ENCODE measurements at regions of chr17 and their contacts with region 1.

Region 1: GRCh38 chr17:50547035-50547735 is at the start of gene SPATA20:
- DNase-seq: peak; percentile 96 to 97
- H3K4me3 ChIP-seq: peak within 1 kb of the TSS in 2 of 3 donors; percentile 38 to 56
- H3K27ac ChIP-seq: peak within 1 kb of the TSS; percentile 76 to 90 (median 82)
- H3K4me1 ChIP-seq: peaks cover 16 to 26% of the 10 kb centered on the region in 2 donors
- H3K27me3 ChIP-seq: no peaks in the 10 kb centered on the region
- CTCF ChIP-seq: peak; percentile 98 to 100 (median 99)
- POLR2A ChIP-seq: peak; percentile 66 to 91
- total RNA-seq, gene SPATA20: 94.9 to 177 (median 125) TPM

Region 2: DNA sequence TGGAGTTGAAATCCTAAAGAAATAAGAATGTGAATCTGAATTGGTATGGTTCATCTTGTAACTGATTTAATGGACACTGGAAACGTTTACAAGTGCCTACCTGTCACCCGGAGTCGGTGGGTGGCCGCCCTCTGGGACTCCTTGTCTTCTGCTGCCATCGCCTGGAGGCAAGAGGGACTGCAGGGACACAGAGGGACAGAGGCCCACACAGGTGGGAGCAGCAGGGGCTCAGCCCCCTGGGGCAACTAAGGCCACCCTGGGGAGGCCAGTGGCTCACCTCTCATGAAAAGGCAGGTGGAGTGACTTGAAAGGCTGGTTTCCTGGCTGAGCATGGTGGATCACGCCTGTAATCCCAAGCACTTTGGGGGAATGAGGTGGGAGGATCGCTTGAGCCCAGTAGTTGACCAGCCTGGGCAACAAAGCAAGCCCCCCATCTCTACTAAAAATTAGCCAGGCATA is 249.7 kb before region 1 on chr17:
- intact Hi-C with region 1: no loop called
- DNase-seq: peak; percentile 76 to 83
- H3K4me3 ChIP-seq: no peak overlapping the region
- H3K27ac ChIP-seq: no peak overlapping the region
- H3K4me1 ChIP-seq: no peaks in the 10 kb centered on the region
- H3K27me3 ChIP-seq: no peaks in the 10 kb centered on the region
- CTCF ChIP-seq: peak; percentile 79 to 97 (median 92)
- POLR2A ChIP-seq: no peak

Region 3: GRCh38 chr17:50498021-50498874 is 48.9 kb before region 1 on chr17:
- intact Hi-C with region 1: no loop called
- DNase-seq: no peak
- H3K4me3 ChIP-seq: no peak overlapping the region
- H3K27ac ChIP-seq: no peak overlapping the region
- H3K4me1 ChIP-seq: no peaks in the 10 kb centered on the region
- H3K27me3 ChIP-seq: no peaks in the 10 kb centered on the region
- CTCF ChIP-seq: no peak
- POLR2A ChIP-seq: no peak

Region 4: GRCh38 chr17:50697663-50698274 is 150.6 kb after region 1 on chr17:
- intact Hi-C with region 1: loop called (anchors 5 kb)
- DNase-seq: no peak
- H3K4me3 ChIP-seq: no peak overlapping the region
- H3K27ac ChIP-seq: no peak overlapping the region
- H3K4me1 ChIP-seq: peaks cover 12 to 23% of the 10 kb centered on the region in 2 donors
- H3K27me3 ChIP-seq: no peaks in the 10 kb centered on the region
- CTCF ChIP-seq: no peak
- POLR2A ChIP-seq: no peak

Region 5: GRCh38 chr17:50707289-50708049 is 160.3 kb after region 1 on chr17 and contains the start of gene ANKRD40:
- intact Hi-C with region 1: loop called (anchors 5 kb)
- DNase-seq: peak; percentile 85 to 87
- H3K4me3 ChIP-seq: peak within 1 kb of the TSS; percentile 46 to 70 (median 52)
- H3K27ac ChIP-seq: peak within 1 kb of the TSS; percentile 96 to 98 (median 98)
- H3K4me1 ChIP-seq: peaks cover 20 to 32% of the 10 kb centered on the region in 2 donors
- H3K27me3 ChIP-seq: no peaks in the 10 kb centered on the region
- CTCF ChIP-seq: no peak
- POLR2A ChIP-seq: peak; percentile 18 to 68
- total RNA-seq, gene ANKRD40: 29.4 to 40.2 (median 35.1) TPM

Region 6: DNA sequence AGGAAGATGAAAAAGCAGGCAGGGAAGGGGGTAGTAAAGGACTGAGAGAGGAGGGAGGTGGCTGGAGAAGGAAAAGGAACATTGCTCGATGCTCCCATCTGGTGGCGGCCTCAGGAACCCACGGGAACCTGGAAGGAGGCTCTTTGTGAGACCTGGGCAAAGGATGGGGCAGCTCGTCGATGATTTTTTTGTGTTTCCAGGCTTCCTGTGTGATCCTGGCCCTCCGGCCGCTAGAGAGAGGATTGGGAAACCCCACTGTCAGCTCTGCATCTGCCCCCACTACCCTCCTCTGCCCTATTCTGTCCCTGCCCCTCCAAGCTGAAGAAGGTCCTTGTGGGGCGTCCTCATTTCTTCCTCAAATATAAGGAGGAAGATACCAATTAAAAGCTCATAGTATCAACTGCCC is 294.8 kb after region 1 on chr17:
- intact Hi-C with region 1: loop called (anchors 5 kb)
- DNase-seq: peak; percentile 64 to 72
- H3K4me3 ChIP-seq: no peak overlapping the region
- H3K27ac ChIP-seq: no peak overlapping the region
- H3K4me1 ChIP-seq: no peaks in the 10 kb centered on the region
- H3K27me3 ChIP-seq: no peaks in the 10 kb centered on the region
- CTCF ChIP-seq: peak; percentile 44 to 91 (median 79)
- POLR2A ChIP-seq: no peak

Measured in thyroid gland (tissue), 4 donors.